ENCODE measurements at regions of chr16 and their contacts with region 1.

Region 1: GRCh38 chr16:391885-392335 is 5.1 kb upstream of the NME4 start:
- DNase-seq: peak; percentile 60 to 84 (median 70)
- ATAC-seq: peak; percentile 92
- H3K4me3 ChIP-seq: no peak overlapping the region
- H3K4me3 Mint-ChIP-seq: peak overlapping the region; percentile 39
- H3K27ac ChIP-seq: no peak overlapping the region
- H3K27ac Mint-ChIP-seq: peak overlapping the region; percentile 57
- H3K4me1 ChIP-seq: peaks cover 14% of the 10 kb centered on the region
- H3K4me1 Mint-ChIP-seq: peaks cover 15% of the 10 kb centered on the region
- H3K27me3 ChIP-seq: no peaks in the 10 kb centered on the region
- H3K27me3 Mint-ChIP-seq: no peaks in the 10 kb centered on the region
- CTCF ChIP-seq: peak; percentile 51

Region 2: GRCh38 chr16:483341-484075 is 91.6 kb after region 1 on chr16:
- CTCF ChIA-PET with region 1: interaction called, 8 read pairs
- POLR2A ChIA-PET with region 1: interaction called, 3 read pairs
- intact Hi-C with region 1: loop called (anchors 2 kb)
- DNase-seq: no peak
- ATAC-seq: no peak
- H3K4me3 ChIP-seq: no peak overlapping the region
- H3K4me3 Mint-ChIP-seq: no peak overlapping the region
- H3K27ac ChIP-seq: no peak overlapping the region
- H3K27ac Mint-ChIP-seq: no peak overlapping the region
- H3K4me1 ChIP-seq: no peaks in the 10 kb centered on the region
- H3K4me1 Mint-ChIP-seq: no peaks in the 10 kb centered on the region
- H3K27me3 ChIP-seq: no peaks in the 10 kb centered on the region
- H3K27me3 Mint-ChIP-seq: no peaks in the 10 kb centered on the region
- CTCF ChIP-seq: no peak